H1 (cell line): ENCODE measurements at regions of chr11 and their contacts with region 1.

Region 1: DNA sequence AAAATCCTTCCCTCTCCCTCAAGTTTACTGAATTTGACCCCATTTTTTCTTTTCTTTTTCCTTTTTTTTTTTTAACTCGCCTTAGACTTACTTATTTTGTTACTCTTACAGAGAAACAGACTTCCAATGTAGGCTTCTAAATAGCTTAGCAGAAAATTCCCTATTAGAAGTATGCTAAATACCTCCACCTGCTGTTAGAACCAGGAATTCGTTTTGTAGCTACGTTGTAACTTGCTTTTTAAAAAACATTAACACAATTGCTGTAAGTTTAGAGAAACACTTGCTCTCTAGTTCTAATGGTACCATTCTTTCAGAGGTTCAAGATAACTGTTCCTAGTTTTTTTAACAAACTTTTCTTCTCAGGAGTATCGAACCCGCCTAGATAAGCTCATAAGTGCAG is 324.2 kb downstream of the DCDC1 start:
- DNase-seq: no peak
- H3K4me3 ChIP-seq: no peak overlapping the region
- H3K27ac ChIP-seq: no peak overlapping the region
- H3K4me1 ChIP-seq: 0 out of 7 replicates have a peak, but pooled peaks cover 0 to 3% (median 0%) of the 10 kb centered on the region in 4 experiments
- H3K27me3 ChIP-seq: no peaks in the 10 kb centered on the region
- CTCF ChIP-seq: peak in 2 of 3 experiments; percentile 29 to 50; a peak in 2 of 4 replicates
- EP300 ChIP-seq: no peak
- POLR2A ChIP-seq: no peak
- RAD21 ChIP-seq: peak; percentile 43 to 55

Region 2: GRCh38 chr11:30960387-30960992 is 84.8 kb before region 1 on chr11:
- CTCF ChIA-PET with region 1: interaction called, 77 read pairs
- POLR2A ChIA-PET with region 1: no interaction called
- DNase-seq: no peak
- H3K4me3 ChIP-seq: no peak overlapping the region
- H3K27ac ChIP-seq: no peak overlapping the region
- H3K4me1 ChIP-seq: no peaks in the 10 kb centered on the region
- H3K27me3 ChIP-seq: no peaks in the 10 kb centered on the region
- CTCF ChIP-seq: peak in 2 of 3 experiments; percentile 72 to 75; a peak in 3 of 4 replicates
- EP300 ChIP-seq: no peak
- POLR2A ChIP-seq: no peak
- RAD21 ChIP-seq: peak; percentile 93 to 94

Region 3: DNA sequence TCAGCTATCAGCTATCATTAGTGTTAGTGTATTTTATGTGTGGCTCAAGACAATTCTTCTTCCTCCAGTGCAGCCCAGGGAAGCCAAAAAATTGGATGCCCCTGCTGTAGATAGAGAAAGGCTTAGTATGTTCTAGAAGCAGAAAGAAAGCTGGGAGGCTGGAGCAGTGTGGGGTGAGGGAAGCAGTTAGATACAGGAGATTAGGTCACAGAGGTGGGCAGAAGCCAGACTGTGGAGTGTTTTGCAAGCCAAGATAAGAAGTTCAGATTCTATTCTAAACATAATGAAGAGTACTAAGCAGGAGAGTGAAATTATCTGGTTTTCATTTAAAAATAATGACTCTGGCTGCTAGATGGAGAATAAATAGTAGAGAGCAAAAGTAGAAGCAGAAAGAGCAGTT is 57.5 kb before region 1 on chr11:
- CTCF ChIA-PET with region 1: interaction called, 17 read pairs
- POLR2A ChIA-PET with region 1: no interaction called
- DNase-seq: no peak
- H3K4me3 ChIP-seq: no peak overlapping the region
- H3K27ac ChIP-seq: no peak overlapping the region
- H3K4me1 ChIP-seq: no peaks in the 10 kb centered on the region; a peak in 1 of 7 replicates
- H3K27me3 ChIP-seq: no peaks in the 10 kb centered on the region
- CTCF ChIP-seq: no peak
- EP300 ChIP-seq: no peak
- POLR2A ChIP-seq: no peak
- RAD21 ChIP-seq: no peak

Region 4: DNA sequence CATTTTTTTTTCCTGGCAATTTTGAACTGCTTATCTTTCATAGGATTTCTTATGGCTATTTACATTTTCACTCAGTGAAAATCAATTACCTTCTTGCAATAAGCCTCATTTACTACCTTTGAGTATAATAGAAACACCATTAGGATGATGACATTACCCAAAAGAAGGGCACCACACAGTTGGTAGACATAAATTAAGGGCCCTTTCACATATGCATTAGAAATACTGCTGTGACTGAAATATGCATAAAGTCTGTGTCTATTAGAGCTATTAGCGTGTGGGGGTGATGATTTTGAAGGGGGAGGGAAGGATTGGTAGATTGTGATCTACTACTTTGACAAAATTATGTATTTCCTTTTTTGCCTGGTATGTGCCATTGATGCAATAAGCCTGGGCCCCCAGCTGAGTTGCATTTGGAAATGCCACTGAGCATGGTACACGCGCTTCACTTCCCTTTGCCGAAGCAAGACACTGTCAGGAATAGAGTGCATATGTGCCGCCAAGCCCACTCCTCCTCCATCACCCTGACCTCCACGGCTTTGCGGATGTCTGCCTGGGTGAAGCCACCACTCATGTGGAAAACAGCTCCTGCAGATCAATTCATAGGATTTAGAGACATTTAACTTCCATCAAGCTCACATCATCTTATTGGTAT is 15.1 kb before region 1 on chr11:
- CTCF ChIA-PET with region 1: interaction called, 11 read pairs
- POLR2A ChIA-PET with region 1: no interaction called
- DNase-seq: no peak
- H3K4me3 ChIP-seq: no peak overlapping the region
- H3K27ac ChIP-seq: no peak overlapping the region
- H3K4me1 ChIP-seq: no peaks in the 10 kb centered on the region
- H3K27me3 ChIP-seq: no peaks in the 10 kb centered on the region
- CTCF ChIP-seq: no peak
- EP300 ChIP-seq: no peak
- POLR2A ChIP-seq: no peak
- RAD21 ChIP-seq: no peak

Region 5: GRCh38 chr11:31246451-31247165 is 201.3 kb after region 1 on chr11:
- CTCF ChIA-PET with region 1: no interaction called
- POLR2A ChIA-PET with region 1: no interaction called
- DNase-seq: no peak
- H3K4me3 ChIP-seq: no peak overlapping the region
- H3K27ac ChIP-seq: no peak overlapping the region
- H3K4me1 ChIP-seq: peaks cover 0 to 7% (median 2%) of the 10 kb centered on the region in 4 experiments; a peak in 3 of 7 replicates
- H3K27me3 ChIP-seq: no peaks in the 10 kb centered on the region
- CTCF ChIP-seq: no peak
- EP300 ChIP-seq: no peak
- POLR2A ChIP-seq: no peak
- RAD21 ChIP-seq: no peak